ENCODE measurements at regions of chr1 and their contacts with region 1.

Region 1: GRCh38 chr1:100184536-100184935 is 6.5 kb upstream of the LRRC39 start:
- DNase-seq: peak; percentile 23
- ATAC-seq: peak; percentile 91
- H3K4me3 ChIP-seq: no peak overlapping the region
- H3K27ac ChIP-seq: no peak overlapping the region
- H3K4me1 ChIP-seq: peaks cover 11% of the 10 kb centered on the region
- H3K27me3 ChIP-seq: no peaks in the 10 kb centered on the region
- CTCF ChIP-seq: no peak
- EP300 ChIP-seq: no peak
- POLR2A ChIP-seq: no peak
- RAD21 ChIP-seq: no peak

Region 2: DNA sequence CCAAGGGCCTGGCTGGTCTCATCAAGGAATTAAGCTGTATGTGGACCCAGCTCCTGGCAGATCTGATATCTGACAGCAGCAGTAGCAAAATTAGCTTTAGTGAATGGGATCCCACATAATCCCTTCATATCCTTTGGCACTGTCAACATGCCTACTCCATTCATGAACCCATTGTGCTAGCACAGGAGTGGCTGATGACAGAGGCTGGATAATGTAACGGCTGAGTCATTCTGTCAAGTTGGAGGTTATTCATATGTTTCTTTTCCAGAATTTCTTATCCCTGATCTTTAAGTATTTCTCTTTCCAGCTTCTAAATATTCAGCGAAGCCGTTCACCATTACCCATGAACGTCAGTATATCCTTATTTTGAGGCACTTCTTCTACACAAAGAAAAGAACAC is 625.8 kb after region 1 on chr1:
- CTCF ChIA-PET with region 1: no interaction called
- POLR2A ChIA-PET with region 1: interaction called, 10 read pairs
- RAD21 ChIA-PET with region 1: no interaction called
- SMC1A ChIA-PET with region 1: no interaction called
- in situ Hi-C with region 1: no loop called
- intact Hi-C with region 1: no loop called
- DNase-seq: no peak
- ATAC-seq: no peak
- H3K4me3 ChIP-seq: no peak overlapping the region
- H3K27ac ChIP-seq: no peak overlapping the region
- H3K4me1 ChIP-seq: no peaks in the 10 kb centered on the region
- H3K27me3 ChIP-seq: no peaks in the 10 kb centered on the region; a peak in 1 of 4 replicates
- CTCF ChIP-seq: no peak
- EP300 ChIP-seq: no peak
- POLR2A ChIP-seq: no peak
- RAD21 ChIP-seq: no peak

Measured in GM12878 (cell line).